ENCODE measurements at regions of chrX and their contacts with region 1.

Region 1: DNA sequence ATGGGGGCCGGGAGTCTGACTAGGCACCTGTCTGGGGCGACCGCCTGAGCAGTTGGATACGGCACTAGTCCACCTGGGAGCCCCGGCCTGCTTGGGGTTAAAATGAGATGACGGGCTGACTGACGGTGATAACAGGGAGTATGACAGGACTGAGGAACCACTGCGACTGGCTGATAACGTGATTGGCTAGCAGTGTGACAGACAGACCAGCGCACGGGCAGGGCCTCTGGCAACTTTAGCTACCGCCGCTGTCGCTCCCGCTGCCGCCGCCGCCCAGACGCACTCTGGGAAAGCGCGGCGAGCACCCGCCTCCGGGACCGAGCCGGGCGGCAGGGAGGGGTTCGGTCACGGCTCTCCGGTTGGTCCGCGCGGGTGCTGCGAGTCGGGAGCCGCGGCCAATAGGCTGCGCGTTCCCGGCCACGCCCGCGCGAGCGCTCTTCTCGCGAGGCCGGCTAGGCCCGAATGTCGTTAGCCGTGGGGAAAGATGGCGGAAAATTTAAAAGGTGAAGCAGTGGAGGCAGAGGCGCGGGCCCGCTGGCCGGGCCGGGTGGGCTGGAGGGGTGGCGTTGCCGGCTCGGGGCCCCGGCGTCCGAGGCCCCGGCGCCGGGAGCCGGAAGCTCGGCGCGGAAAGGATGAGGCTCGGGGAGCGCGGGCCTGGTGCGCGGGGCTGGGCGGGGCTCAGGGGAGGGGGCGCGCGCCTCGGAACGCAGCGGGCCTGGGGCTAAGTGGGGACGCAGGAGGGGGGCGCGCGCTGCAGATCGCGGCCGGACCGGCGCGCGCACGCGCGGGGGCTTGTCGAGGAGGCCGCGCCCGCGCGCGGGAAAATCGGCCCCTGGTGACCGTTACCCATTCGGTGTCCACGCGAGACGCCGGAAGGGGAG is at the start of gene SUV39H1:
- DNase-seq: peak; percentile 78 to 89
- ATAC-seq: peak; percentile 95
- H3K4me3 ChIP-seq: peak within 1 kb of the TSS; percentile 60 to 66 (median 61)
- H3K27ac ChIP-seq: peak within 1 kb of the TSS; percentile 91 to 96 (median 95)
- H3K4me1 ChIP-seq: no peaks in the 10 kb centered on the region
- H3K27me3 ChIP-seq: no peaks in the 10 kb centered on the region
- CTCF ChIP-seq: no peak
- POLR2A ChIP-seq: peak; percentile 79 to 86
- total RNA-seq, gene SUV39H1: 1.7 to 6.1 (median 3.3) TPM

Region 2: GRCh38 chrX:48531357-48531959 is 165.1 kb before region 1 on chrX:
- in situ Hi-C with region 1: no loop called
- intact Hi-C with region 1: no loop called
- DNase-seq: peak; percentile 4 to 19
- ATAC-seq: peak; percentile 88 to 90
- H3K4me3 ChIP-seq: no peak overlapping the region
- H3K27ac ChIP-seq: peak overlapping the region in 3 of 4 donors; percentile 18 to 69 (median 43)
- H3K4me1 ChIP-seq: no peaks in the 10 kb centered on the region
- H3K27me3 ChIP-seq: no peaks in the 10 kb centered on the region
- CTCF ChIP-seq: no peak
- POLR2A ChIP-seq: no peak

Region 3: DNA sequence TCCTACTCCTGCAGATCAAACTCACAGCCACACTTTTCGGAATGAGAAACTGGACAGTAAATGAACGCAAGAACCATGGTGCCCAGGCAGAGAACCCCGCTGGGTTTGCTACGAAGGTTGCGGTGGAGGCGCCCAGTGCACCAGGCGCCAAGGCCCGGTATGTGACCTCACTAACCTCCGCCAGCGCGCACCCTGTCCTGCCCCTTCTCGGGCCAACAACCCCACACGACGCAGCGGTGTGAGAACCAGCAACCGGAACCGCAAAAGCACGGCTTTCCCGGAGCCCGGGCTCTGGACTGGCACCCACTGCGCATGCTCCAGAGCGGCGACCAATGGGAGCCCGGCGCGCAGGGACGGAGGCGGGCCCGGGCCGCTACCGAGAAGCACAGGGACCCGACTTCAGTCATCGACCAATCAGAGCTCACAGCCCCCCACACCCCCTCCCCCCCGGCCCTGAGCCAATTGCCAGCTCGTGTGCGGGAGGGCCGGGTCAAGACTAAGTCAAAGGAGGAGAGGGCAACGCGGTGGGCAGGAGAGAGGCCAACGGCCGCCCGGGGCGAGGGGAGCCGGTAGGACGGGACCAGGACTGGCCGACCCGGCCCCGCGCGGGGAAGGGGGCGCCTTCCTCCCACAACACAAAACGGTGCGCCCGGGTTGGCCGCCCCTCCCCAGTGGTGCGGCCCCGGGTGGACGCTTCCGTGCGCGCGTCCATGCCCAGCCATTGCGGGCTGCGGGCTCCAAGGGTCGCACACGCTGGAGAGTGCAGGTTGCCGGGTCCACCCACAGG is 20.2 kb before region 1 on chrX:
- in situ Hi-C with region 1: no loop called
- intact Hi-C with region 1: loop called (anchors 1 kb)
- DNase-seq: peak; percentile 84 to 90
- ATAC-seq: peak; percentile 94 to 98
- H3K4me3 ChIP-seq: peak overlapping the region; percentile 67 to 77 (median 72)
- H3K27ac ChIP-seq: peak overlapping the region; percentile 86 to 95 (median 90)
- H3K4me1 ChIP-seq: no peaks in the 10 kb centered on the region
- H3K27me3 ChIP-seq: no peaks in the 10 kb centered on the region
- CTCF ChIP-seq: no peak
- POLR2A ChIP-seq: peak; percentile 53 to 68

Region 4: GRCh38 chrX:48737213-48737938 is 40.8 kb after region 1 on chrX:
- in situ Hi-C with region 1: no loop called
- intact Hi-C with region 1: loop called (anchors 1 kb)
- DNase-seq: peak; percentile 89 to 93
- ATAC-seq: peak; percentile 100
- H3K4me3 ChIP-seq: peak overlapping the region; percentile 66 to 73 (median 70)
- H3K27ac ChIP-seq: peak overlapping the region; percentile 81 to 94 (median 91)
- H3K4me1 ChIP-seq: peaks cover 5 to 7% of the 10 kb centered on the region in 2 donors
- H3K27me3 ChIP-seq: no peaks in the 10 kb centered on the region
- CTCF ChIP-seq: no peak
- POLR2A ChIP-seq: peak in 1 of 2 donors; percentile 51

Measured in gastrocnemius medialis (tissue), 4 donors.